HepG2 (cell line): ENCODE measurements at regions of chr1 and their contacts with region 1.

Region 1: GRCh38 chr1:207052911-207053769 is at the start of gene PFKFB2:
- DNase-seq: peak; percentile 99
- ATAC-seq: peak; percentile 89
- H3K4me3 ChIP-seq: peak within 1 kb of the TSS; percentile 95 to 98 (median 96)
- H3K27ac ChIP-seq: peak within 1 kb of the TSS; percentile 90
- H3K4me1 ChIP-seq: peaks cover 30% of the 10 kb centered on the region
- H3K27me3 ChIP-seq: no peaks in the 10 kb centered on the region; a peak in 1 of 5 replicates
- CTCF ChIP-seq: peak; percentile 36
- EP300 ChIP-seq: no peak; a peak in 1 of 4 replicates
- POLR2A ChIP-seq: peak; percentile 86 to 87
- RAD21 ChIP-seq: peak; percentile 57
- total RNA-seq, gene PFKFB2: 9.4 and 10.6 TPM in 2 replicates

Region 2: DNA sequence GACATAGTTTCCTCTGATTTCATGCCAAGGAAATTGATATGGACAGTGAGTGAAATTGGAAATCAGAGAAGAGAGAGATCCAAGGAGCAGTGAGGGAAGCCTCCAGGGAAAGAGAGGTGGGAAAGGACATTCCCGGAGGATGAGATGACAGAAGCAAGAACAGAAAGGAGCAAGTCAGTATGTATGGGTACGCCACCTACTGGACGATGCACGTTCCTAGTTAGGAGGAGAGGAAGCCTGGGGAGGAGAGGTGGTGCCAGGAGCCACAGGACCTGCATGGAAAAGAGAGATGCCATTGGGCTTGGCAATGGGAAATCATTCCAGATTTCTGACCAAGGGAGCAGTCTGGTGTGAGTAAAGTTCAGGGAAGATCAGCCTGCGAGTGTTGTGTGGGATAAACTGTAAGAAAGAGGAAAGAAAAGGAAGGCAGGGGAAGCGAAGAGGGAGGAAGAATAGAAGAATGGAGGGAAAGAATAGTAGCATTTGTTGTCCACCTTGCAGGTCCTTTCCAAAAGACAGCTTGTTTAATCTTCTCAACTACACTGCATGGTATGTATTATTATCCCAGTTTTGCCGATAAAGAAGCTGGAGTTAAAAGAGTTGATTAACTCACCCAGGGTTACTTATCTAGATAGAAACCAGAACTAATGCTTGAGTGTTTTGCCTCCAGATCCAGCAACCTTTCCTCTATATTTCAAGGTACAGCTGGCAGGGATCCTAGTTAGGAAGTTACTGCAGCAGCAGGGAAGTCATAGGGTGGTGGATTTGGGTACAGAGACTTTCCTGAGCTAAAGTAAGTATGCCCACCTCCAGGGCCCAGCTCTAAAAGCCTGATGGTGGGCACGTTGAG is 47.9 kb before region 1 on chr1:
- CTCF ChIA-PET with region 1: no interaction called
- POLR2A ChIA-PET with region 1: interaction called, 7 read pairs
- in situ Hi-C with region 1: no loop called
- intact Hi-C with region 1: loop called (anchors 2 kb)
- DNase-seq: peak; percentile 73
- ATAC-seq: peak; percentile 80
- H3K4me3 ChIP-seq: no peak overlapping the region
- H3K27ac ChIP-seq: no peak overlapping the region
- H3K4me1 ChIP-seq: peaks cover 81% of the 10 kb centered on the region
- H3K27me3 ChIP-seq: no peaks in the 10 kb centered on the region
- CTCF ChIP-seq: peak; percentile 82
- EP300 ChIP-seq: no peak
- POLR2A ChIP-seq: no peak
- RAD21 ChIP-seq: no peak

Region 3: DNA sequence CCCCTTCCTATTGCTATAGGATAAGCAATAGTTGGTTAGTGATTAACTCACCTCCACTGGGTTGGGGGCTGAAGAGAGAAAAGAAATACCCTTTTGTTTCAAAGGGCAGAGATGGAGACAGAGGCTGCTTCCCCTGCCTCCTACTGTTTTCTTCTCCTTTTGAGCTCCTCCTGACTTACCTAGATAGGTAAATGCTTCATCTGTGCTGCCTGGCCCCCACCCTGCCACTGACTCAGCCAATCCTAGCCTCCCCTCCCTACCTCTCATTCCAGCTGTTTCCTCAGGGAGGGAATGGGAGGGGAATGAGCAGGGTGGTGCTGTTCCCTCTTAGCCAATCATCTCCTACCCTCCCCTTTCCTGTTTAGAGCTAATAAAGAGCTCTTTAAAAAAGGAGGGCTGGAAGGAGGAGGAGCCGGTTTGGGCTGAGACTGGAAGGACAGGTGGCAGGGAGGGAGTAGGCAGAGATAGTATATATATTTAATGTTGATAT is 20.6 kb before region 1 on chr1 and contains the start of gene C1orf116:
- CTCF ChIA-PET with region 1: no interaction called
- POLR2A ChIA-PET with region 1: interaction called, 25 read pairs
- in situ Hi-C with region 1: no loop called
- intact Hi-C with region 1: loop called (anchors 2 kb)
- DNase-seq: peak; percentile 60
- ATAC-seq: peak; percentile 89
- H3K4me3 ChIP-seq: peak within 1 kb of the TSS; percentile 42 to 55 (median 54)
- H3K27ac ChIP-seq: peak within 1 kb of the TSS; percentile 15
- H3K4me1 ChIP-seq: peaks cover 76% of the 10 kb centered on the region
- H3K27me3 ChIP-seq: no peaks in the 10 kb centered on the region
- CTCF ChIP-seq: no peak
- EP300 ChIP-seq: no peak
- POLR2A ChIP-seq: no peak
- RAD21 ChIP-seq: no peak
- total RNA-seq, gene C1orf116: 0.95 and 1.1 TPM in 2 replicates

Region 4: DNA sequence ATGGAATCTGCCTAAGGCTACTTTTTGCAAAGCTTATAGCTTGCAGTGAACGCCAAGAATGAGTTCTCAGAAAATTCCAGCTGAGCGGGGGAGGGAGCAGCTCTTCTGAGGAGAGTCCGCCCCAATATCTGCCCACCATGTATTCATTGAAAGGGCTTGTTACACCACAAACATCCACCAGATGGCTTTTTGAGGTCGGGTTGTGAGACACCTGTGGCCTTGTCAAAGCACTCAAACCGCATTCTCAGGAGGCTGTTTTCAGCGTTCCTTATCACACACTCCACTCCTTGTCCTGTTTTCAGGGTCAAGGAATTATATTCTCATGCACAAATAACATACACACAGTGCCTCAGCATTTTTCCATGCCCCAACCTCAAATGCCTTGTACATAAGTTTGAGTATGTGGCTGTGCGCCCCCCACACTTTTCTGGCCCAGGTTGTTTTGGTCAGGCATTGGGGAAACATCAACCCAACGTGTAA is 31.6 kb after region 1 on chr1:
- CTCF ChIA-PET with region 1: no interaction called
- POLR2A ChIA-PET with region 1: interaction called, 23 read pairs
- in situ Hi-C with region 1: no loop called
- intact Hi-C with region 1: no loop called
- DNase-seq: peak; percentile 71
- ATAC-seq: peak; percentile 71
- H3K4me3 ChIP-seq: peak overlapping the region in 1 of 3 experiments; percentile 0; a peak in 1 of 6 replicates
- H3K27ac ChIP-seq: no peak overlapping the region
- H3K4me1 ChIP-seq: peaks cover 54% of the 10 kb centered on the region
- H3K27me3 ChIP-seq: no peaks in the 10 kb centered on the region; a peak in 1 of 5 replicates
- CTCF ChIP-seq: peak; percentile 86
- EP300 ChIP-seq: no peak
- POLR2A ChIP-seq: no peak
- RAD21 ChIP-seq: peak; percentile 85

Region 5: DNA sequence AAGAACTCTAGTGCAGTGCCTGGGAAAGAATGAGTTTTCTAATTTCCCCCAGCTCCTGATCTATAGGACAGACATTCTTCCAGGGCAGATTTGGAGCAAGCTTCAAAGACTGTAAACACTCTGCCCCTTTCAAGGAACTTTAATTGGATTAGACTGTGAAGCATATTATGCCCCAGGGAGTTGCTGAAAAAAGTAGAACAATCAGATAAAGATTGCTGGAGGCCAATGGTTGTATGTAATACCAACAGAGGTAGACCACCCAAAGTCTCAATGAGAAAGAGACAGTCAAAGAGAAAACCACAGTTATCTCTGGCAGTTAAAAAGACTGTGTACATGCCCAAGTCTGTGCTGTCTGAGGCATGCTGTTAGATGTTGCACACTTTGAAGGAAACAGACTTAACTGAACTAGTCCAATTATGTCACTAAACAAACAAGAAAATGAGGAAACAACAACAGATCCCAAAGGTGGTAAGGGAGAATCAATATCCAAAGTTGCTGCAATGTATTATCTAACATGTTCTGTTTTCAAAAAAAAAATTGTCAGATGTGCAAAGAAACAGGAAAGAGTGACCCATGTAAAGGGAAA is 75.3 kb after region 1 on chr1:
- CTCF ChIA-PET with region 1: no interaction called
- POLR2A ChIA-PET with region 1: no interaction called
- in situ Hi-C with region 1: no loop called
- intact Hi-C with region 1: no loop called
- DNase-seq: peak; percentile 7
- ATAC-seq: peak; percentile 38; the same call in 1 of the 3 replicates
- H3K4me3 ChIP-seq: no peak overlapping the region
- H3K27ac ChIP-seq: no peak overlapping the region
- H3K4me1 ChIP-seq: no peaks in the 10 kb centered on the region
- H3K27me3 ChIP-seq: no peaks in the 10 kb centered on the region
- CTCF ChIP-seq: no peak
- EP300 ChIP-seq: no peak
- POLR2A ChIP-seq: no peak
- RAD21 ChIP-seq: no peak

Region 6: DNA sequence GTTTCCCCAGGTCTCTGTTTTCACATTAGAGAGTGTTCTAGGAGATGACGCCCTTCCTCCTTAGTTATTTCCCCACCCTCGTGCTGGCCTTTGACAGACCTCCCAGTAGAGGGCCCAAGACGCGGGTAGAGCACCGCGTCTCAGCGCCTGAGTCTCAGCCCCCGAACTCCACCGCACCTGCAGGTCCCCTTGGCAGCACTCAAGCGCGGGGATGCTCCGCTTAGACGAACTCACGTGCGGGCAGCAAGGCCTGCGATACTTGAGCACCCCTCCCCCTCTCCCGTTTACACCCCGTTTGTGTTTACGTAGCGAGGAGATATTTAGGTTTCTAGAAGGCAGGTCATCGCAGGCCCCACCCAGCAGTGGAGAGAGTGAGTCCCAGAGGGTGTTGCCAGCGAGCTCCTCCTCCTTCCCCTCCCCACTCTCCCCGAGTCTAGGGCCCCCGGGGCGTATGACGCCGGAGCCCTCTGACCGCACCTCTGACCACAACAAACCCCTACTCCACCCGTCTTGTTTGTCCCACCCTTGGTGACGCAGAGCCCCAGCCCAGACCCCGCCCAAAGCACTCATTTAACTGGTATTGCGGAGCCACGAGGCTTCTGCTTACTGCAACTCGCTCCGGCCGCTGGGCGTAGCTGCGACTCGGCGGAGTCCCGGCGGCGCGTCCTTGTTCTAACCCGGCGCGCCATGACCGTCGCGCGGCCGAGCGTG is 268.1 kb after region 1 on chr1 and contains the start of gene CD55:
- CTCF ChIA-PET with region 1: no interaction called
- POLR2A ChIA-PET with region 1: interaction called, 14 read pairs
- in situ Hi-C with region 1: no loop called
- intact Hi-C with region 1: no loop called
- DNase-seq: peak; percentile 91
- ATAC-seq: peak; percentile 95
- H3K4me3 ChIP-seq: peak within 1 kb of the TSS; percentile 72 to 91 (median 83)
- H3K27ac ChIP-seq: peak within 1 kb of the TSS; percentile 55
- H3K4me1 ChIP-seq: peaks cover 14% of the 10 kb centered on the region; the same call in 1 of the 2 replicates
- H3K27me3 ChIP-seq: no peaks in the 10 kb centered on the region; a peak in 2 of 5 replicates
- CTCF ChIP-seq: peak; percentile 52
- EP300 ChIP-seq: no peak
- POLR2A ChIP-seq: peak in 1 of 2 experiments; percentile 69; a peak in 1 of 4 replicates
- RAD21 ChIP-seq: no peak; the same call in 1 of the 2 replicates
- total RNA-seq, gene CD55: 2.7 and 6.0 TPM in 2 replicates